Mammary epithelial cell (primary cell): ENCODE measurements at regions of chr1 and their contacts with region 1.

Region 1: GRCh38 chr1:23044035-23044434 is 24.8 kb downstream of the KDM1A start:
- DNase-seq: peak; percentile 76
- H3K4me3 ChIP-seq: no peak overlapping the region
- H3K27ac ChIP-seq: no peak overlapping the region
- H3K4me1 ChIP-seq: peaks cover 17% of the 10 kb centered on the region
- H3K27me3 ChIP-seq: no peaks in the 10 kb centered on the region
- CTCF ChIP-seq: no peak

Region 2: GRCh38 chr1:23062271-23062670 is 18.2 kb after region 1 on chr1:
- CTCF ChIA-PET with region 1: no interaction called
- dilution Hi-C with region 1: no loop called
- in situ Hi-C with region 1: no loop called
- intact Hi-C with region 1: no loop called
- DNase-seq: no peak
- H3K4me3 ChIP-seq: no peak overlapping the region
- H3K27ac ChIP-seq: no peak overlapping the region
- H3K4me1 ChIP-seq: no peaks in the 10 kb centered on the region
- H3K27me3 ChIP-seq: no peaks in the 10 kb centered on the region
- CTCF ChIP-seq: no peak

Region 3: DNA sequence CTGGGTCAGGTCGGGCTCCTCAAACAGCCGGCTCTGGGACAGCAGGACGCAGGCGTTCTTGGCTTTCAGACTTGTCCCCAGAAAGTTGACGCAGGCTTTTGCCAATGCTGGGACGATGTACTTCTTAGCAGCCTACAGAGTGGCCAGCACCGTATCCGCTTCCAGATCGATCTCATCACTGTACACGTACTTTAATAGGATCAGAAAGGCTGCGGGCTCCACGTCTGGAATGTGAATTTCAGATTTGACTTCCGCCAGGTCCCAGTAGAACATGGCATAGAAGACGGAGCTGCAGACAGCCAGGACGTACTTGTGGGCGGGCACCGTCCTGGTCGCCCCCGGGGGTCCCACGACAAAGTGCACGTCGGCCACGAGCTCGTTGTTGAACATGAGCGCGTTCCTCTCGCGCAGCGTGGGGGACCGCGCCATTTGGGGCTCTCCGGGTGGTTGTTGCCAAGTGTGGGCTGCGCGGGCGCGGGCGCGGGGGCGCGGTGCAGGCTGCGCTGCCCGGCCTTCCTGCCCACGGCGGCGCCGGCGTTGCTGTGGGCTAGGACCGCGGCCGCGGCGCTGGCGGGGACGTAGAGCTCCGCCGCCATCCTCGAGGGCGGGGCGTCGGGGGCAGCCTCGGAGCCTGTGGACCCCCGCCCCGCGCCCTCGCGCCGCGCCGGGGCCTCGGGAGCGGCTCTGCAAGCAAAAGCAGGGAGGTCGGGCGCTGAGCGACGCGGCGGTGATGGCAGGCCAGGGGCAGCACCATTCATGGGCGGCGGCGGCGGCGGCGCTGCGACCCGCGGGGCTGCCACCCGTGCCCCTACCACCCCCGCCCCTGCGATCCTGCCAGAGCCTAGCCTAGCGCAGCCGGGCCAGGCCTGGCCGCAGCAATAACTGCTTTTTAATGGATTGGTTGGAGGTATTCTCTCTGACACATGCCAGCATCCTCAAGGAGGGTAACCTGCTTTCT is 858.6 kb after region 1 on chr1:
- CTCF ChIA-PET with region 1: interaction called, 11 read pairs
- dilution Hi-C with region 1: no loop called
- in situ Hi-C with region 1: no loop called
- intact Hi-C with region 1: no loop called
- DNase-seq: no peak
- H3K4me3 ChIP-seq: peak overlapping the region in 1 of 3 experiments; percentile 20
- H3K27ac ChIP-seq: no peak overlapping the region
- H3K4me1 ChIP-seq: peaks cover 14% of the 10 kb centered on the region
- H3K27me3 ChIP-seq: peaks cover 17% of the 10 kb centered on the region
- CTCF ChIP-seq: no peak